WTC11 (cell line): ENCODE measurements at regions of chr6 and their contacts with region 1.

Region 1: DNA sequence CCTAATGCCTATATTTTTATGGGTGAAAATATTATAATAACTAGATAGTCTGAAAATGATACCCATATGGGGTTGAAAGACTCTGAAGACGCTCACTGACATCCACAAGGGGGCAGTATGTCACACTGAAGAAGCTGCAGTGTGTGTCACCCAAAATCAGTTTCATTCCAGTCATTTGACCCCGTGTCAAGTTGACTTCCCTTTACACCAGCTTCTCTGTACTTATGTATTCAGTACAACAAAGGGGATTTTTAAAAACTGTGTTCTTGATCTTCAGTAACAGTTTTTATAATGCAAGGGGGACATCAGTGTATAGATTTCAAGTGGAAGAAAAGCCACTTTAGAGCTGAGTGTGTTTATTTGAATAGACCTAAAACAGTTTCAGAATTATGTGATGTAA is 19.3 kb downstream of the FAXC start:
- DNase-seq: peak; percentile 52
- ATAC-seq: peak; percentile 78
- H3K4me3 Mint-ChIP-seq: no peak overlapping the region
- H3K27ac Mint-ChIP-seq: no peak overlapping the region
- H3K4me1 Mint-ChIP-seq: peaks cover 6% of the 10 kb centered on the region
- H3K27me3 Mint-ChIP-seq: no peaks in the 10 kb centered on the region
- CTCF ChIP-seq: peak; percentile 49; the same call in 1 of the 2 replicates

Region 2: DNA sequence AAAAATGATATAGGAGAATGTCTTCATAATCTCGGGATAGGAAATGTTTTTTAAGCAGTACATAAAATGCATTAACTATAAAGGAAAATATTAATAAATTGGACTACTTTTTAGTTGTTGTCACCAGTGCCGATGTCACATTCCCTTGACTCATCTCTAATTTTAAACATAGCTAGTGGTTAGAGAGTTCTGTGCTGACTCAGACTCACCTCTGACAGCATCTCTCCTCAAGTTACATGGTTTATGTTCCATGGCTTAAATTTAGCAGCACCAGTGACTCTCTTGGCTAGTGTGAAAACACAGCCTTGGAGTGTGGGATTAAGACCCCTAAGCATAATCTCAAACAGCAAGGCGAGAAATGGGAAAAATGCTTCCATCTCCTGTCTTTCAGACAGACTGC is 1735.3 kb before region 1 on chr6:
- CTCF ChIA-PET with region 1: no interaction called
- POLR2A ChIA-PET with region 1: no interaction called
- DNase-seq: no peak
- ATAC-seq: no peak
- H3K4me3 Mint-ChIP-seq: no peak overlapping the region
- H3K27ac Mint-ChIP-seq: no peak overlapping the region
- H3K4me1 Mint-ChIP-seq: peaks cover 13% of the 10 kb centered on the region
- H3K27me3 Mint-ChIP-seq: peaks cover 94% of the 10 kb centered on the region
- CTCF ChIP-seq: no peak

Region 3: DNA sequence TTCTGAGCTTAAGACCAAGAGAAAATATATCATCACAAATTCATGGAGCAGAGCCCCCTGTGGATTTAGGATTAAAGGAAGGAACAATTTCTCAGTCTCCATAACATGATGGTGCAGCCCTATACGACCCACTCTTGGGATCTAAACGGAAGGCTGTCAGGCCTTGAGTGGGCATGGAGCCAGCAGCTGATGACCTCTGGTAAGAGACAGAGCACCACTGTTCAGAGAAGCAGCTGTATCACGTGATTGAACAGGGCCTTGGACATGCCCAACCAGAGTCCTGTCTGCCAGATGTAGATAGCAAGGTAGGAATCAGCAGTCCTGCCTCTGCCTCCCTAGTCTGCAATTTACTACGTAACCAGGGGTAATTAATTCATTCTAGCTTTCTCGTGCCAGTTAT is 755.2 kb before region 1 on chr6:
- CTCF ChIA-PET with region 1: no interaction called
- POLR2A ChIA-PET with region 1: no interaction called
- DNase-seq: no peak
- ATAC-seq: no peak
- H3K4me3 Mint-ChIP-seq: no peak overlapping the region
- H3K27ac Mint-ChIP-seq: no peak overlapping the region
- H3K4me1 Mint-ChIP-seq: peaks cover under 1% of the 10 kb centered on the region; the same call in 1 of the 2 replicates
- H3K27me3 Mint-ChIP-seq: no peaks in the 10 kb centered on the region; the same call in 1 of the 2 replicates
- CTCF ChIP-seq: no peak

Region 4: GRCh38 chr6:99318542-99318941 is 11.6 kb before region 1 on chr6:
- CTCF ChIA-PET with region 1: interaction called, 25 read pairs
- POLR2A ChIA-PET with region 1: no interaction called
- DNase-seq: no peak
- ATAC-seq: peak; percentile 26; the same call in 1 of the 2 replicates
- H3K4me3 Mint-ChIP-seq: no peak overlapping the region
- H3K27ac Mint-ChIP-seq: no peak overlapping the region
- H3K4me1 Mint-ChIP-seq: peaks cover 8% of the 10 kb centered on the region
- H3K27me3 Mint-ChIP-seq: no peaks in the 10 kb centered on the region
- CTCF ChIP-seq: no peak

Region 5: DNA sequence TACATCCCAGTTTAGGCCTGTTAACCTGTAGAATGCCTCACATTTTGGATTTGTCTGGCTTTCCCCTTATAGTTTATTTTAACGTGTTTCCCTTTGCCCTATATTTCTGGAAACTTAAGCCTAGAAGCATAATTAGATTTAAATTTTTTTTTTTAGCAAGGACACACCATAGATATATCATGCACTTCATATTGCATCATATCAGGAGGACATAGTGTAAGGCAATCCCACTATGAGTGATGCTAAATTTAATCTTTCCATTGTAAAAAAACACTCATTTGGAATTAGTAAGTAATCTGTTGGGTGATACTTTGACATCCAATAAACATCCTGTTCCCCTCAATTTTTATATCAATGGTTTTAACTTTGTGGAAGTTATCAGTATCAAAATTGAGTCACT is 29.6 kb after region 1 on chr6:
- CTCF ChIA-PET with region 1: interaction called, 10 read pairs
- POLR2A ChIA-PET with region 1: no interaction called
- DNase-seq: no peak
- ATAC-seq: no peak
- H3K4me3 Mint-ChIP-seq: no peak overlapping the region
- H3K27ac Mint-ChIP-seq: no peak overlapping the region
- H3K4me1 Mint-ChIP-seq: 0 out of 2 replicates have a peak, but pooled peaks cover 2% of the 10 kb centered on the region
- H3K27me3 Mint-ChIP-seq: peaks cover 8% of the 10 kb centered on the region
- CTCF ChIP-seq: no peak

Region 6: GRCh38 chr6:99393698-99394531 is 63.8 kb after region 1 on chr6 and contains the start of gene COQ3:
- CTCF ChIA-PET with region 1: interaction called, 21 read pairs
- POLR2A ChIA-PET with region 1: interaction called, 7 read pairs
- DNase-seq: peak; percentile 90
- ATAC-seq: peak; percentile 96
- H3K4me3 Mint-ChIP-seq: peak within 1 kb of the TSS; percentile 93
- H3K27ac Mint-ChIP-seq: peak within 1 kb of the TSS; percentile 99
- H3K4me1 Mint-ChIP-seq: peaks cover 7% of the 10 kb centered on the region
- H3K27me3 Mint-ChIP-seq: no peaks in the 10 kb centered on the region
- CTCF ChIP-seq: no peak
- total RNA-seq, gene COQ3: 13.9 to 16.0 TPM (median 14.1 TPM) in 3 replicates